IMR-90 (cell line): ENCODE measurements at regions of chr10 and their contacts with region 1.

Region 1: DNA sequence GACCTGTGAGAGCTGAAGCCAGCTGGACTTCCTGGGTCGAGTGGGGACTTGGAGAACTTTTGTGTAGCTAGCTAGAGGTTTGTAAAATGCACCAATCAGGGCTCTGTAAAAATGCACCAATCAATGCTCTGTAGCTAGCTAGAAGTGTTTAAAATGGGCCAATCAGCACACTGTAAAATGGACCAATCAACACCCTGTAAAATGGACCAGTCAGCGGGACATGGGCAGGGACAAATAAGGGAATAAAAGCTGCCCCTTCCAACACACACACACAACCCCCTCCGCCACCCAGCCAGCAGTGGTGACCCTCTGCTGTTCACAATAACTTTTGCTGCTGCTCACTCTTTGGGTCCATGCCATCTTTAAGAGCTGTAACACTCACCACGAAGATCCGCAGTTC is 7.1 kb downstream of the ZNF511 start:
- DNase-seq: no peak
- ATAC-seq: no peak
- H3K4me3 ChIP-seq: no peak overlapping the region
- H3K27ac ChIP-seq: no peak overlapping the region
- H3K4me1 ChIP-seq: no peaks in the 10 kb centered on the region
- H3K27me3 ChIP-seq: no peaks in the 10 kb centered on the region; the same call in 1 of the 2 replicates
- CTCF ChIP-seq: no peak
- POLR2A ChIP-seq: no peak
- RAD21 ChIP-seq: no peak

Region 2: DNA sequence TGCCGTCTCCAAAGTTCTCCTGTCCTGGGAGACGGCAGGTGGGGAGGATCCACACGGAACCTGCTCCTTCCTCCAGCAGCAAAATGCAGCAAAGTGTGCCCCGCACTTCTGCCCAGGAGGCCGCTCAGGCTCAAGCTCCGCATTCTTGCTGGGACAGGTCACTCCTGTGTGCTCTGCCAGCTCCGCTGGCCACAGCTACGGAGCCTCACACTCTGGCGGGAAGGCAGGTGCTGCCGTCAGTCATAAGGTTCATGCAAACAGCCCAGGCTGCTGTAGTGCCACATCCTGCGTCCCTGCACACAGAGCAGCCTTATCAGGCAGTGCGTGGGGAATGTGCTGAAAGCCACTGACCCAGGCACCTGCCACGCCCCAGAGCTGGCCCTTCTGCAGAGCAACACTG is 205.7 kb before region 1 on chr10:
- CTCF ChIA-PET with region 1: no interaction called
- POLR2A ChIA-PET with region 1: no interaction called
- dilution Hi-C with region 1: no loop called
- in situ Hi-C with region 1: no loop called
- intact Hi-C with region 1: no loop called
- DNase-seq: no peak
- ATAC-seq: no peak
- H3K4me3 ChIP-seq: no peak overlapping the region
- H3K27ac ChIP-seq: no peak overlapping the region
- H3K4me1 ChIP-seq: no peaks in the 10 kb centered on the region
- H3K27me3 ChIP-seq: no peaks in the 10 kb centered on the region; the same call in 1 of the 2 replicates
- CTCF ChIP-seq: no peak
- POLR2A ChIP-seq: no peak
- RAD21 ChIP-seq: no peak

Region 3: DNA sequence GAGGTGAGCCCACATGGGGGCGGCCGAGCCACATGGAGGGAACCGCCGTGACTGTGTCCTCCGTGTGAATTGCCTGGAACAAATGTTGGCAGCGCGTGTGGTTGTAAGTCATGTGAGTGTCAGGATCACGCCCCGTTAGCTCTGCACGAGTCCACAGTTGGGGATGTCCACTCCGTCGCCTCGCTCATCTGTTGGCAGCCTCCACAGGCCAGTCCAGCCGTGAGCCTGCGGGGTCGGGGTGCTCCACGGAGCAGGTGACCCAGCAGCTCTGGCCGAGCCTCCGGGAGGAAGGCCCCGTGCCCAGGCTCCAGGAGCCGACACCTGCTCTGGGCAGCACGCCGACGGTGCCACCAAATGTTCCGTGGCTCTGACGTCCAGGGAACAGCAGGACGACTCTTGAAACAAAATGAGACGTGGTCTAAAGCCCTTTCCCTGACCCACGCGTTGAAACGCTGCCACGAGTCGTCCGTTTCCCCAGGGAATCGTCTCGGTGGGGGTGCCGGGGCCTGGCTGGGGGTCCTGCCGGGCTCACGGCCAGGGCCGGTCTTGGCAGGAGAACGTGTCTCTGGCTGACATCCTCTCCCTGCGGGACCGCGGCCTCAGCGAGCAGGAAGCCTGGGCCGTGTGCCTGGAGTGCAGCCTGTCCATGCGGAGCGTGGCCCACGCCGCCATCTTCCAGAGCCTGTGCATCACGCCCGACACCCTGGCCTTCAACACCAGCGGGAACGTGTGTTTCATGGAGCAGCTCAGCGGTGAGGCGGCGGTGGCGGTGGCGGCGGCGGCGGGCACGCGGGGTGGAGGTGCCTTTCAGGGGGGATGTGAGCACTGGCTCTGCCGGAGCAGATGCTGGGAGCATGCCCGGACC is 148.8 kb before region 1 on chr10:
- CTCF ChIA-PET with region 1: interaction called, 10 read pairs
- POLR2A ChIA-PET with region 1: no interaction called
- dilution Hi-C with region 1: no loop called
- in situ Hi-C with region 1: no loop called
- intact Hi-C with region 1: no loop called
- DNase-seq: no peak
- ATAC-seq: no peak
- H3K4me3 ChIP-seq: no peak overlapping the region
- H3K27ac ChIP-seq: no peak overlapping the region
- H3K4me1 ChIP-seq: no peaks in the 10 kb centered on the region
- H3K27me3 ChIP-seq: no peaks in the 10 kb centered on the region
- CTCF ChIP-seq: no peak
- POLR2A ChIP-seq: no peak
- RAD21 ChIP-seq: no peak

Region 4: DNA sequence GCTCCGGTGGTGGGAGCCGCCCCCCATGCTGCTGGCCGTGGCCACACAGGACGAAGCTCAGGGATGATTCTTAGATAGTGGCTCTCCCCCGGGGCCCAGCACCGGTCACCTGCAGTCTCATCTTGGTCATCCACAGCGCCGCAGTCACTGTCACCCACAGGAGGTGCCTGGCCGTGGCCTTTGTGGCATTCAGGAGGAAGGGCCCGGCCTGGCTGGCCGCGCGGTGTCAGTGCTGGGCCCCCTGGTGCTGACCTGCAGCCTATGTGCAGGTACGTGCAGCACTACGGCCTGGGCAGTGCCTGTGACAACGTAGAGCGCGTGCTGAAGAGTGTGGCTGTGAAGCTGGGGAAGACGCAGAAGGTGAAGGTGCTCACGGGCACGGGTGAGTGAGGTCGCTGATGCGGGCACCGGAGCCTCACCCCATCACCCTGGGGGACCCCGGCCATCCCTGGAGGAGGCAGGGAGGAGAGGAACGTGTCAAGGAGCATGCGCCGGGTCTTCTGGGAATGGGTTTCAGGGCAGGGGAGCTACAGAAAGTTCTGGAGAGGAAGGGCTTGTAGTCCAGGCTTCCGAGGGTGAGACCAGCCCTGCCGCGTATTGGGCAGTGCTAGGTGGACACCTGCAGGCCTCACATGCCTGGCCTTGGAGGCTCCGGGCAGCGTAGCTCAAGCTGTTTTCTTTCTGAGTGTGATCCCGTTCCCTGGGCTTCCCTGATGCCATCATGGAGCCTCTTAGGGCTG is 103.5 kb after region 1 on chr10:
- CTCF ChIA-PET with region 1: no interaction called
- POLR2A ChIA-PET with region 1: no interaction called
- dilution Hi-C with region 1: no loop called
- in situ Hi-C with region 1: no loop called
- intact Hi-C with region 1: no loop called
- DNase-seq: no peak
- ATAC-seq: no peak
- H3K4me3 ChIP-seq: no peak overlapping the region
- H3K27ac ChIP-seq: no peak overlapping the region
- H3K4me1 ChIP-seq: no peaks in the 10 kb centered on the region; the same call in 1 of the 2 replicates
- H3K27me3 ChIP-seq: peaks cover 3% of the 10 kb centered on the region; the same call in 1 of the 2 replicates
- CTCF ChIP-seq: no peak
- POLR2A ChIP-seq: no peak
- RAD21 ChIP-seq: no peak